ENCODE measurements at regions of chr4 and their contacts with region 1.

Region 1: DNA sequence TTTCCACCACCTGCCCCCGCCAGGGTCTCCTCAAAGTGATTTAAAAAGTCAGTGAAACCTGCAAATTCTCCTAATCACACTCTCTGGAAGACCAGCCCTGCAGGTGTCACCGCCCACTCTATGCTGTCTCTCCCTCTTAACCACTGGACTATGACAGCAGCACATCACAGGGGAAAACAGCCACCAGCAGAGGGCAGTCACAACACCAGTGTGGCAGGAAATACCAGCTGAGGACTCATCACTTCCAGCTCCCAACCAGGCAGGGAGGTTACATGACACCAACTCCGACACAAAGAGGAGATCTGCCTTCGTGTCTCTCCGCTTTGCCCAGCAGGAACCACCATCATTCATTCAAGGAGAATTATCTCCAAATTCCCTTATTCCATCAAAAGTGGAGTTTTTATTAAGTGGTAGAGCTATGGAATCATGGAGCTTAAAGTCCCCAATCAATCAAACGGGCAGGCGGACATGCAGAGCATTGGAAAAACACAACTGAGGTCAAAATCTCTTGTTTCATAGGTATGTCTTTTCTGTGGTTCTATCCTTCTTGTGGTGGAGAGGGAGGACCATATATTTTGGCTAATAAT is 91.3 kb downstream of the NSUN7 start:
- DNase-seq: peak; percentile 72
- H3K4me3 ChIP-seq: peak overlapping the region in 1 of 2 experiments; percentile 5; a peak in 1 of 4 replicates
- H3K27ac ChIP-seq: peak overlapping the region in 1 of 2 experiments; percentile 69; a peak in 2 of 4 replicates
- H3K4me1 ChIP-seq: peaks cover 0 to 26% of the 10 kb centered on the region in 2 experiments; a peak in 1 of 4 replicates
- H3K27me3 ChIP-seq: no peaks in the 10 kb centered on the region
- CTCF ChIP-seq: peak; percentile 92
- EP300 ChIP-seq: no peak
- RAD21 ChIP-seq: peak; percentile 68

Region 2: DNA sequence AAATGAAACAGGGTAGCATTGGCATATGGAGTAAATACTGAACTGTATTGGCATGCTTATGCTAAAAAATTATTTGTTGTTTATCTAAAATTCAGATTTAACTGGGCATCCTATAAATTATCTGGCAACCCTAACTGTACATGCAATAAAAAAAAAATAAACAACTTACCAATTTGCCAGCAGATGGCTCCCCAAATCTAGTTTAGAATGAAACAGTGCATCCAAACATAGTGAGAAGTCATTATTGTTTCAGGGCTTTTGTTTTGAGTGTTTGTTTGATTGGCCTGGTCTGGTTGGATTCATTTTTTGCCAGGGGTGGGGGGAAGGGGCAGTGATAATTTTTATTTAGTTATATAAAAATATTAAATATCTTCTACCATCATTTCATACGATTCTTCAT is 104.2 kb before region 1 on chr4:
- CTCF ChIA-PET with region 1: interaction called, 11 read pairs
- POLR2A ChIA-PET with region 1: no interaction called
- DNase-seq: peak; percentile 53
- H3K4me3 ChIP-seq: no peak overlapping the region
- H3K27ac ChIP-seq: no peak overlapping the region
- H3K4me1 ChIP-seq: no peaks in the 10 kb centered on the region
- H3K27me3 ChIP-seq: no peaks in the 10 kb centered on the region
- CTCF ChIP-seq: peak; percentile 65
- EP300 ChIP-seq: no peak
- RAD21 ChIP-seq: peak; percentile 84

Region 3: GRCh38 chr4:40769266-40769665 is 71.8 kb before region 1 on chr4:
- CTCF ChIA-PET with region 1: no interaction called
- POLR2A ChIA-PET with region 1: no interaction called
- DNase-seq: no peak
- H3K4me3 ChIP-seq: no peak overlapping the region
- H3K27ac ChIP-seq: no peak overlapping the region
- H3K4me1 ChIP-seq: no peaks in the 10 kb centered on the region
- H3K27me3 ChIP-seq: no peaks in the 10 kb centered on the region
- CTCF ChIP-seq: no peak
- EP300 ChIP-seq: peak in 1 of 2 experiments; percentile 11; a peak in 1 of 4 replicates
- RAD21 ChIP-seq: no peak

Region 4: DNA sequence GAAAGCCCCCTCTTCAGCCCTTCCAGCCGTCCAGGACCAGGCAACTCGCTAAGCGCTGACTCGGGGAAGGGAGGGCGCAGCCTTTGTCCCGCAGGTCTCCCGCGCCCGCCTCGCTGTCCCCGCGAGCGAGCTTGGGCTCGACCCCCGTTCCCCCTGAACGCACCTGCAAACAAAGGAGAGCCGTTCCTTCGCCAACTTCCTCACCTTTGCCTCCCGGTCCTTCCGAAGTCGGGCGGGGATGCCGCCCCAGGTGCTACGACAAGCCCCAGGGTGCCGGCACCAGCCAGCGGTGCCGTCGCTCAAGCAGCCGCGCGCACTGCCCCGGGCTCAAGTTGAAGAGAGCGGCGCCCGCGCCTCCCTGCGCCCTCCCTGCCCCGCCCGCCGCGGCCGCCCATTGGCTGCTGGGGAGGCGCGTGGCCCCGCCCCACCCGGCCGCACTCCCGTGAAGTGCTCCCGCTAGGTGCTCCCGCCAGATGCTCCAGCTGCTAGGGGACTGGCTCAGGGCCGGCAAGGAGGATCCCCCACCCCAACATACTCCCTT is 15.8 kb after region 1 on chr4:
- CTCF ChIA-PET with region 1: interaction called, 16 read pairs
- POLR2A ChIA-PET with region 1: no interaction called
- DNase-seq: peak; percentile 96
- H3K4me3 ChIP-seq: peak overlapping the region in 1 of 2 experiments; percentile 48; a peak in 2 of 4 replicates
- H3K27ac ChIP-seq: peak overlapping the region in 1 of 2 experiments; percentile 24; a peak in 1 of 4 replicates
- H3K4me1 ChIP-seq: no peaks in the 10 kb centered on the region; a peak in 1 of 4 replicates
- H3K27me3 ChIP-seq: no peaks in the 10 kb centered on the region
- CTCF ChIP-seq: no peak
- EP300 ChIP-seq: no peak
- RAD21 ChIP-seq: no peak

Region 5: GRCh38 chr4:40908702-40909362 is 67.8 kb after region 1 on chr4:
- CTCF ChIA-PET with region 1: interaction called, 10 read pairs
- POLR2A ChIA-PET with region 1: no interaction called
- DNase-seq: peak; percentile 77
- H3K4me3 ChIP-seq: peak overlapping the region in 1 of 2 experiments; percentile 43; a peak in 1 of 4 replicates
- H3K27ac ChIP-seq: peak overlapping the region; percentile 83 to 92
- H3K4me1 ChIP-seq: peaks cover 13 to 24% of the 10 kb centered on the region in 2 experiments
- H3K27me3 ChIP-seq: no peaks in the 10 kb centered on the region
- CTCF ChIP-seq: peak; percentile 96
- EP300 ChIP-seq: no peak
- RAD21 ChIP-seq: peak; percentile 80

Region 6: GRCh38 chr4:40916880-40917279 is 75.8 kb after region 1 on chr4:
- CTCF ChIA-PET with region 1: interaction called, 10 read pairs
- POLR2A ChIA-PET with region 1: no interaction called
- DNase-seq: no peak
- H3K4me3 ChIP-seq: no peak overlapping the region
- H3K27ac ChIP-seq: peak overlapping the region; percentile 25 to 67; a peak in 3 of 4 replicates
- H3K4me1 ChIP-seq: peaks cover 11 to 33% of the 10 kb centered on the region in 2 experiments
- H3K27me3 ChIP-seq: no peaks in the 10 kb centered on the region
- CTCF ChIP-seq: peak; percentile 43
- EP300 ChIP-seq: no peak
- RAD21 ChIP-seq: no peak; the same call in 1 of the 2 replicates

Region 7: GRCh38 chr4:40924096-40924792 is 83.2 kb after region 1 on chr4:
- CTCF ChIA-PET with region 1: interaction called, 31 read pairs
- POLR2A ChIA-PET with region 1: no interaction called
- DNase-seq: peak; percentile 83
- H3K4me3 ChIP-seq: peak overlapping the region in 1 of 2 experiments; percentile 10; a peak in 1 of 4 replicates
- H3K27ac ChIP-seq: no peak overlapping the region
- H3K4me1 ChIP-seq: no peaks in the 10 kb centered on the region; a peak in 1 of 4 replicates
- H3K27me3 ChIP-seq: no peaks in the 10 kb centered on the region
- CTCF ChIP-seq: peak; percentile 94
- EP300 ChIP-seq: no peak
- RAD21 ChIP-seq: peak; percentile 79

Measured in SK-N-SH (cell line).